ENCODE measurements at regions of chr10 and their contacts with region 1.

Region 1: DNA sequence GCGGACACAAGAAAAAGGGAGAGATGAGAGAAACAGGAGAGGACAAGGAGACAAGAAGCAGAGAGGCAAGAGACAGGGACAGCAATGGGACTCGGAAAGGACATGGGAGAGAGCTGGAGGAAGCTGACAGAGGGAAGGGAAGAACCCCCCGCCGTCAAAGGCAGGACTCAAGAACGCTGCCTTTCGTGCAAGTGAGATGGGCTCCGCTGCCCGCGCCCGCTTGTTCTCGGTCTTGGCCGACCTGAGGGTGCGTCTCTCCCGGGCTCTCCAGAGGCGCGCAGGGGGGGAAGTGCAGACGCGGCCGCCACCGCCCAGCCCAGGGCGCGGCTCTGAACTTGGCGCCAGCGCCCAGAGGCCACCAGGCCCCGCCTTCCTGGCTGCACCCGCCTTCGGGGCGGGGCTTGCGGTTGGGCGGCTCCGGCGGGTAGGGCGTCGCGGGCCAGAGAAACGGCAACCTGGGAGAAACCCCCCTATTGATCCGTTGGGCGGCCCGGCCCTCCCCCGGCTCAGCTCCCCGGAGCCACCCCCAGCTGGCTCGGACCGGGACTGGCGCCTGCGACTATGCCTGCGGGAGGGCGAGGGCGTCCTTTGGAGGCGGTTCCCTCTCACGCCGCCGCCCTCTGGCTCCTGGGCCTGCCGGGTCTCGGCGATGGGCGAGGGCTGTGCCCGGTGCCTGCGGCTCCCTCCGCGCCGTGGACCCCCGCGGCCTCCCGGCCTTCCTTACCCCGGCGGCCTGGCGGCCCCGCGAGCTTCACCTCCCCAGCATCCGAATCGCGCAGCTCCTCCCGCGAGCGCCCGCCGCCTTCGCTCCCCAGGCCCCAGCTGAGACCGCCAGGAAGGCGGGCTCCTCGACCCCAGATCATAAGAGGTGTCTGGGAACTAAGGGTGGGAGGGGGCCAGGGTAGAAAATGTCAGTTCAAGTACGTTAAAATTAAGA is 2.2 kb upstream of the ANTXRL start:
- DNase-seq: peak; percentile 85 to 86
- H3K4me3 ChIP-seq: peak overlapping the region; percentile 41 to 73 (median 49)
- H3K27ac ChIP-seq: peak overlapping the region; percentile 55 to 76 (median 71)
- H3K4me1 ChIP-seq: peaks cover 20 to 26% of the 10 kb centered on the region in 2 donors
- H3K27me3 ChIP-seq: no peaks in the 10 kb centered on the region
- CTCF ChIP-seq: no peak
- POLR2A ChIP-seq: peak in 1 of 2 donors; percentile 55

Region 2: GRCh38 chr10:46106410-46107255 is 177.9 kb before region 1 on chr10:
- intact Hi-C with region 1: loop called (anchors 10 kb)
- DNase-seq: peak; percentile 62 to 66
- H3K4me3 ChIP-seq: peak overlapping the region in 1 of 3 donors; percentile 46
- H3K27ac ChIP-seq: no peak overlapping the region
- H3K4me1 ChIP-seq: peaks cover 0 to 6% of the 10 kb centered on the region in 2 donors
- H3K27me3 ChIP-seq: no peaks in the 10 kb centered on the region
- CTCF ChIP-seq: peak in 5 of 6 experiments; percentile 11 to 38 (median 32)
- POLR2A ChIP-seq: peak in 1 of 2 donors; percentile 24

Region 3: DNA sequence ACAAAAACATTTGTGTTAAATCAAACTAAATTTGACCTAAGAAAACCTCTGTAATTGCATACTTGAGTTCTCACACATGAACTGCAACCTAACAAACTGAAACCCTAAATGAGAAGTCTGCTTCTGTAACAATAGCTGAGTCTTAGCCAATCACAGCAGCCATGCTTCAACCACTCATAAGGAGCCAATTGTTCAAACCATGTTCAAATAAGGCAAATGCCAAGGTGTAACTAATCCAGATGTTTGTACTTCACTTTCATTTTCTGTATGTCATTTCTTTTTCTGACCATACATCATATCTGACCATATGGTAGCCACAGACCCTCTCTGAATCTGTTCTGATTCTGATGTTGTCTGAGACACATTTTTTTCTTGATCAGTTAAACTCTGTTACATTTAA is 45.3 kb before region 1 on chr10:
- intact Hi-C with region 1: no loop called
- DNase-seq: no peak
- H3K4me3 ChIP-seq: no peak overlapping the region
- H3K27ac ChIP-seq: no peak overlapping the region
- H3K4me1 ChIP-seq: peaks cover 6 to 7% of the 10 kb centered on the region in 2 donors
- H3K27me3 ChIP-seq: no peaks in the 10 kb centered on the region
- CTCF ChIP-seq: no peak
- POLR2A ChIP-seq: no peak

Region 4: GRCh38 chr10:47384148-47384921 is 1099.8 kb after region 1 on chr10 and contains the start of gene ZNF488:
- intact Hi-C with region 1: loop called (anchors 5 kb)
- DNase-seq: peak; percentile 83 to 84
- H3K4me3 ChIP-seq: peak within 1 kb of the TSS; percentile 37 to 85 (median 62)
- H3K27ac ChIP-seq: peak within 1 kb of the TSS in 2 of 3 donors; percentile 30 to 73
- H3K4me1 ChIP-seq: peaks cover 0 to 4% of the 10 kb centered on the region in 2 donors
- H3K27me3 ChIP-seq: no peaks in the 10 kb centered on the region
- CTCF ChIP-seq: no peak
- POLR2A ChIP-seq: peak in 1 of 2 donors; percentile 55
- total RNA-seq, gene ZNF488: 0.24 to 0.56 (median 0.40) TPM in 3 of 4 donors, not detected in the other

Measured in thyroid gland (tissue), 4 donors.